ENCODE measurements at regions of chr7 and their contacts with region 1.

Region 1: DNA sequence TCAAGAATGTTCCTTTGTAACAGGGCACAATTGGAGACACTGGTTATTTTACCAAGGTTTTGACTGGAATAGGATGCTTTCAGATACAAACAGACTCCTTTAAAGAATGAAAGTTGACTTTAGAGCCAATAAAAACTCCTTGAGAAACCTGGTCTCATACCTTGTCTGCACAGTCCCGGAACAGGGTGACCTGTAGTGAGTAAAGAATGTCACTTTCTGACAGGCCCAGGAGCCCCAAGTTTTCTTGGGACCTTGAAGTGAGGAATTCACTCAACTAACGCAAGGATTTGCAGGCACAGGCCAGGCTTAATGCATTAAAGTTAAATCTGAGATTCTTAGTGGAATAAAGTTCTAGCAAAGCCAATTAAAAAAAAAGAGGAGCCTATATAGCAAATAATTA is 11.5 kb upstream of the GARS1 start:
- DNase-seq: no peak
- ATAC-seq: no peak
- H3K4me3 ChIP-seq: no peak overlapping the region
- H3K27ac ChIP-seq: no peak overlapping the region
- H3K4me1 ChIP-seq: no peaks in the 10 kb centered on the region
- H3K27me3 ChIP-seq: no peaks in the 10 kb centered on the region
- CTCF ChIP-seq: no peak
- EP300 ChIP-seq: no peak
- POLR2A ChIP-seq: no peak
- RAD21 ChIP-seq: no peak

Region 2: GRCh38 chr7:30430276-30430675 is 152.9 kb before region 1 on chr7:
- CTCF ChIA-PET with region 1: no interaction called
- POLR2A ChIA-PET with region 1: no interaction called
- RAD21 ChIA-PET with region 1: no interaction called
- SMC1A ChIA-PET with region 1: no interaction called
- in situ Hi-C with region 1: no loop called
- intact Hi-C with region 1: no loop called
- DNase-seq: no peak
- ATAC-seq: no peak
- H3K4me3 ChIP-seq: no peak overlapping the region
- H3K27ac ChIP-seq: no peak overlapping the region
- H3K4me1 ChIP-seq: peaks cover 26% of the 10 kb centered on the region
- H3K27me3 ChIP-seq: no peaks in the 10 kb centered on the region
- CTCF ChIP-seq: no peak
- EP300 ChIP-seq: no peak
- POLR2A ChIP-seq: no peak
- RAD21 ChIP-seq: no peak

Region 3: GRCh38 chr7:30594549-30595435 is 11.6 kb after region 1 on chr7 and contains the start of gene GARS1:
- CTCF ChIA-PET with region 1: no interaction called
- POLR2A ChIA-PET with region 1: no interaction called
- RAD21 ChIA-PET with region 1: no interaction called
- SMC1A ChIA-PET with region 1: no interaction called
- in situ Hi-C with region 1: no loop called
- intact Hi-C with region 1: loop called (anchors 1 kb)
- DNase-seq: peak; percentile 55
- ATAC-seq: peak; percentile 92
- H3K4me3 ChIP-seq: peak within 1 kb of the TSS; percentile 96
- H3K27ac ChIP-seq: peak within 1 kb of the TSS; percentile 85
- H3K4me1 ChIP-seq: peaks cover 7% of the 10 kb centered on the region; the same call in 1 of the 2 replicates
- H3K27me3 ChIP-seq: no peaks in the 10 kb centered on the region
- CTCF ChIP-seq: no peak
- EP300 ChIP-seq: peak; percentile 6 to 100; a peak in 2 of 4 replicates
- POLR2A ChIP-seq: peak; percentile 98
- RAD21 ChIP-seq: no peak
- polyA plus RNA-seq, gene GARS1: 133 to 191 TPM

Measured in GM12878 (cell line).